Heart right ventricle (tissue), 16 donors: ENCODE measurements at regions of chr15 and their contacts with region 1.

Region 1: DNA sequence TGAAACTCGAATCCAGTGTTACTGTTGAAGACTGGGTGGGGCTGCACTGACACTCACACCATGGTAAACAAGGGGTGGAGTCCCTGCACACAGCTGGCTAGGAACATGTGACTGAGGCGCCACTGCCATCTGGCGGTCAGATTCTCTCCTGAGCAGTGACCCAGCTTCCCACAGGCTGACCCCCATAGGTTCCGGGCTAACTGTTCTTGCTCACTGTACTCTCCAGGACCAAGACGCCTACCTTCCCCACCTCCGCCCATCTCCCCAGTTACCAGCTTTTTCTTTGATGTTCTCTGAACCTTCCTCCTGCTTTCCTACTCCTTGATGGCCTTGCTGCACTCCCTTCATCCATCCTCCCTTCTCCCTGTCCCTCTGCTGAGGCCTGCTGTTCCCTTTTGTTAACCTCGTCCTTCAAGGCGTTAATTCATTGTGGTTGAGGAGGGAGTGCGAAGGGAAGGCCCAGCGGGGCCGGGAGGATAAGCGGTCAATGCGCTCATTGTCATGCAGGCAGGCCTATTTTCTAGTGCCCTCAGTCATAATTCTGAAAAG is 115.2 kb downstream of the ATP8B4 start:
- DNase-seq: peak; percentile 88 to 89
- ATAC-seq: peak; percentile 93 to 100 (median 99)
- H3K4me3 ChIP-seq: no peak overlapping the region
- H3K27ac ChIP-seq: peak overlapping the region in 6 of 10 donors; percentile 11 to 68 (median 42)
- H3K4me1 ChIP-seq: peaks cover 0 to 19% (median 4%) of the 10 kb centered on the region in 9 donors
- H3K27me3 ChIP-seq: no peaks in the 10 kb centered on the region
- CTCF ChIP-seq: peak; percentile 59 to 87 (median 79)

Region 2: DNA sequence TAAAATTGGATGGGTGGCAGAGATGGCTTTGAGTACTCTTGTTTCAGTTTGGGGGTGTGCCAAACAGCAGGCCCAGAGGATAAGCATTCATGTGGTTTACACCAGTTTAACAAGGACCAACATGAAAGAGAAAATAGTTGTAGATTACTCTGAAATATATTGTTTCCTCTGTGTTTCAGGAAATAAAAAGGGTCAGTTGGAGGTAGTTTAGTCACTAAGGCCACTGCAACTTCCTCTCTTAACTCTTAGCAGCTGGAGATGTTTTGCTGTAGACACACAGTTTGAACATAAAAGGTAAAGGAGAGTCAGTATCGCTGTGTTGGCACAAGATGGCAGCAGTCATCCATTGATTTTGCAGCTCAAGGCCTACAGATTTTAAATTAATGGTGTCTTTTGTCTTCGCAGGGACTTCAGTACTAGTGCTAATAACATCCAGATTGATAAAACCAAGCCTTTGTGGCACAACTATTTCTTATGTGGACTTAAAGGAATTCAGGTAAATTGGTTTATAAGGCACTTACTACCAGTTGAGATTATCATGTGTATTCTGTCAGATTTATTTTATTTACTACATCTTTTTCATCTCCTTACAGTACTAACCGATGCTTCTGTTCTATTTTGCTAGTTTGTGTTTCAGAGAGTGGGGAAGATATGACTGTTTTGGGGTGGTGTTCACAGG is 768.3 kb before region 1 on chr15:
- intact Hi-C with region 1: loop called in 6 of 10 experiments (anchors 2 to 10 kb)
- DNase-seq: peak in 1 of 2 donors; percentile 46
- ATAC-seq: peak; percentile 64 to 85 (median 80)
- H3K4me3 ChIP-seq: no peak overlapping the region
- H3K27ac ChIP-seq: peak overlapping the region in 3 of 10 donors; percentile 3 to 52 (median 23)
- H3K4me1 ChIP-seq: peaks cover 0 to 52% (median 21%) of the 10 kb centered on the region in 9 donors
- H3K27me3 ChIP-seq: no peaks in the 10 kb centered on the region
- CTCF ChIP-seq: peak; percentile 46 to 82 (median 78)

Region 3: GRCh38 chr15:49664716-49665115 is 339.1 kb before region 1 on chr15:
- intact Hi-C with region 1: no loop called
- DNase-seq: no peak
- ATAC-seq: no peak
- H3K4me3 ChIP-seq: no peak overlapping the region
- H3K27ac ChIP-seq: no peak overlapping the region
- H3K4me1 ChIP-seq: no peaks in the 10 kb centered on the region
- H3K27me3 ChIP-seq: no peaks in the 10 kb centered on the region
- CTCF ChIP-seq: no peak

Region 4: GRCh38 chr15:49876401-49877038 is 127.3 kb before region 1 on chr15:
- intact Hi-C with region 1: loop called in 2 of 10 experiments (anchors 1 to 5 kb)
- DNase-seq: peak in 1 of 2 donors; percentile 29
- ATAC-seq: peak; percentile 44 to 88 (median 80)
- H3K4me3 ChIP-seq: peak overlapping the region in 1 of 10 donors; percentile 2
- H3K27ac ChIP-seq: peak overlapping the region; percentile 54 to 81 (median 73)
- H3K4me1 ChIP-seq: peaks cover 0 to 29% (median 12%) of the 10 kb centered on the region in 9 donors
- H3K27me3 ChIP-seq: no peaks in the 10 kb centered on the region
- CTCF ChIP-seq: peak in 8 of 9 donors; percentile 38 to 53 (median 44)

Region 5: DNA sequence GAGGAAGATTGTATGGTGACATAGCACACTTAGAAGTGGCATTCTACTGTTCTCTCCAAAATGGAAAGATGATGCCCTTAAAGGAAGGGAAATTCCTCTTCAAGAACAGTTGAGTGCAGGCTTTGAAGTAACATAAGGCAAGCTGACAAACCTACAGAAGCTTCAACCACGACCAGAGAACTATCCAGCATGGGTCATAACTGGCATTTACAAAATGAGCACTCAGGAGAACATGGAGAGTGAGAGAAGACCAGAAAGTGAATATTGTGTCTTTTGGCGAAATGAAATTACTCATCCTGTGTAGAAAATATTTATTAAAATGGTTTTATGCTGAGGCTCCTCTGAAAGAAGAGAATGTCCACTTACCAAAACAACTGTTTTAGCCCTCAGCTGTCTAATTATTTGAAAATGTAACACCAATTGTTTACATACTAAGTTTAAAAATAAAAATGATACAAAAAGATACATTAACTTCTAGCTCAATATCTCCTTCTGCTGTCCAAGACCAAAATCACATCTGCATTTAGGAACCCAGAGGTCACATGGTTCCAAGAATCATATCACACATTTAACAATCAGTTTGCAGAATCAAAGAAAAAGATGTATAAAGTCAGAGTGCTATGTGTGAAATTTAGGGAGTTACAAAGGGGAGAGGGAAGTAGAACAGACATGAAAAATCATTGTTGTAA is 101.7 kb before region 1 on chr15:
- intact Hi-C with region 1: loop called in 2 of 10 experiments (anchors 2 to 10 kb)
- DNase-seq: no peak
- ATAC-seq: peak in 4 of 8 donors; percentile 7 to 24 (median 16)
- H3K4me3 ChIP-seq: peak overlapping the region in 2 of 10 donors; percentile 3 to 23
- H3K27ac ChIP-seq: peak overlapping the region; percentile 8 to 87 (median 78)
- H3K4me1 ChIP-seq: peaks cover 0 to 46% (median 18%) of the 10 kb centered on the region in 9 donors
- H3K27me3 ChIP-seq: no peaks in the 10 kb centered on the region
- CTCF ChIP-seq: peak in 5 of 9 donors; percentile 31 to 47 (median 33)

Region 6: GRCh38 chr15:49934488-49934887 is 69.4 kb before region 1 on chr15:
- intact Hi-C with region 1: loop called in 1 of 10 experiments (anchors 10 kb)
- DNase-seq: no peak
- ATAC-seq: no peak
- H3K4me3 ChIP-seq: no peak overlapping the region
- H3K27ac ChIP-seq: peak overlapping the region in 1 of 10 donors; percentile 17
- H3K4me1 ChIP-seq: peaks cover 0 to 13% (median 0%) of the 10 kb centered on the region in 9 donors
- H3K27me3 ChIP-seq: no peaks in the 10 kb centered on the region
- CTCF ChIP-seq: no peak

Region 7: DNA sequence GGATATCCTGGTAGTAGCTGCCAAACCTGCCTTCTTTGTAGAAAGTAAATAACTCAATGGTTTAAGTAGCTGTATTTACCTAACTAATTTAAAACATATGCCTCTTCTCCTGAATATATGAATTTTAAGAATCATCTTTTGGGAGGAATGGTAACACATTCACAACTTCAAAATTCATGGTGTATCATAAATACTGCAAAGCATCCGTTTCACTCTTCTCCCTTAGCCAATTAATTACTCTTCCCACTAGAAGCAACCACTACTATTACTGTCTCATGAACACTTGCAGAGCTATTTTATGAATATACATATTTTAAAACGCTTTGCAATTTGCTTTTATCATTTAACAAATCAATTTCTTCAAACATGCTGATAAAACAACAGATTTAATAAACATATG is 601.6 kb after region 1 on chr15:
- intact Hi-C with region 1: no loop called
- DNase-seq: no peak
- ATAC-seq: no peak
- H3K4me3 ChIP-seq: no peak overlapping the region
- H3K27ac ChIP-seq: no peak overlapping the region
- H3K4me1 ChIP-seq: no peaks in the 10 kb centered on the region
- H3K27me3 ChIP-seq: no peaks in the 10 kb centered on the region
- CTCF ChIP-seq: no peak